CD4-positive, alpha-beta T cell (primary cell): ENCODE measurements at regions of chr10 and their contacts with region 1.

Region 1: DNA sequence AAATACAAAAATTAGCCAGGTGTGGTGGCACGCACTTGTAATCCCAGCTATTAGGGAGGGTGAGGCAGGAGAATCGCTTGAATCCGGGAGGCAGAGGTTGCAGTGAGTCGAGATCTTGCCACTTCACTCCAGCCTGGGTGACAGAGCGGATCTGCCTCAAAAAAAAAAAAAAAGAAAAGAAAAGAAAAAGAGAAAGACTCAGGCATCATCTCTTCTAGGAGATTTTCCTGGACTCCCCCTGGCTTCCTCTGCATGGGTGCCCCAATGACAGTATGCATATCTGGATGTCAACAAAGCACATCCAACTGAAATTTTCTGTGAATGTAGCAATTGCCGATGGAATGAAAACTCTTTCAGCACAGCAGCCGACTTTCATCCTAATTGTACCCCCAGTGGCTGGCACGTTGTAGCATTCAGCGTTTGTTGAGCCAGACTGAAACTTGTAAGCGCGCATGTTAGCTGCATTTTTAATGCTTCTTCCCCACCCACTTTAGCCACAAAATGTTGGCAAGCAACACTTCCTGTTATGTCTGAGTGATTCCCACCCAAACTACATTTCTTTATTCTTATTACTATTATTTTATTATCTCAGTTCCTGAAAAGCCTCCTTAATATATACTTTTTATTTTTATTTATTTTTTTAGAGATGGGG is 70.2 kb downstream of the PRTFDC1 start:
- DNase-seq: peak; percentile 17 to 80 (median 44)
- ATAC-seq: peak; percentile 87
- H3K4me3 ChIP-seq: peak overlapping the region; percentile 42
- H3K4me3 Mint-ChIP-seq: peak overlapping the region; percentile 77
- H3K27ac ChIP-seq: peak overlapping the region in 1 of 2 donors; percentile 63
- H3K27ac Mint-ChIP-seq: peak overlapping the region; percentile 91
- H3K4me1 ChIP-seq: peaks cover 47% of the 10 kb centered on the region
- H3K4me1 Mint-ChIP-seq: peaks cover 52% of the 10 kb centered on the region
- H3K27me3 ChIP-seq: no peaks in the 10 kb centered on the region
- H3K27me3 Mint-ChIP-seq: no peaks in the 10 kb centered on the region
- CTCF ChIP-seq: no peak

Region 2: DNA sequence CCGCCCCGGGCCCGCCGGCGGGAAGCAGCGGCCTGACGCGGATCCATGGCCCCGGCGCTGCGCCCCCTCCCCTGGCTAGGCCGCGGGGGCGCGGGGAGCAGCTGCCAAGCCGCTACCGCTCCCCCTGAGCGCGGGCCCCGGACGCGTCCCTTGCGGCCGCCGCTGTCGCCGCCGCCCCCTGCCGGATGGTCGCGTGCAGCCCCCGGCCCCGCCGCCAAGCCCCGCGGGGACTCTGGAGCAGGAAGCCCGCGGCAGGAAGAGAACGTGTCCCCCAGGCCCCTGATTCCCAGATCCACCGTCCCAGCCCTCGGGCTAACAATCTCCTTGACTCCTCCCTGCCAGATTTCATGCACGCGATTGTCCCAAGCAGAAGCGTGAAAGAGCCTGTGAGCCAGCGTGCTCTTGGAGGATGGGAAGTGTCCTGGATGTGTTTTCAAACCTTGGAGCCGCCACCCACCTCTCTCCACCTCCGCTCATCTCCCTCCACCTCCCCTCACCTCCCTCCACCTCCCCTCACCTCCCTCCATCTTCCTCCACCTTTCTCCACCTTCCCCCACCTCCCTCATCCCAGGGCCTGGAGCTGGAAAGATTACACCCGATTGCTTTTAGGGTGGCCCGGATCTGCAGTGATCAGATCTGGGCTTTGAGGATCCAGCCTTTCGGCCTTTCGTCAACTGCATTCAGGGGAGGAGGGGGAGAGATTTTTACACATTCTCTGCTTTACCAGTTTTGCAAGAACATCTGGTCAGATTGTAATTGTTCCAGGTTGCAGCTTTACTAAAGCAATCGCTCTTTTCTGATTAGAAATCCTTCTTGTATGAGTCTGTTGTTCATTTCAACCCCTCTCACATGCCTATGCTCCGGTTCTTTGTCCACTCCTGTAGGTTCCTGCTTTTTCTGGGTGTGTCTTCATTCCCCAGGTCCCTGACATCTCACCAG is 70.8 kb after region 1 on chr10:
- CTCF ChIA-PET with region 1: interaction called, 3 read pairs
- POLR2A ChIA-PET with region 1: no interaction called
- intact Hi-C with region 1: loop called in 1 of 2 experiments (anchors 5 kb)
- DNase-seq: peak; percentile 7 to 80 (median 54)
- ATAC-seq: peak; percentile 77
- H3K4me3 ChIP-seq: peak overlapping the region; percentile 72
- H3K4me3 Mint-ChIP-seq: peak overlapping the region; percentile 87
- H3K27ac ChIP-seq: no peak overlapping the region
- H3K27ac Mint-ChIP-seq: peak overlapping the region; percentile 62
- H3K4me1 ChIP-seq: peaks cover 17% of the 10 kb centered on the region
- H3K4me1 Mint-ChIP-seq: peaks cover 18% of the 10 kb centered on the region
- H3K27me3 ChIP-seq: no peaks in the 10 kb centered on the region
- H3K27me3 Mint-ChIP-seq: no peaks in the 10 kb centered on the region
- CTCF ChIP-seq: peak; percentile 24